ENCODE measurements at regions of chr3 and their contacts with region 1.

Region 1: GRCh38 chr3:120450600-120451271 is at the start of gene FSTL1:
- DNase-seq: no peak
- H3K4me3 ChIP-seq: peak within 1 kb of the TSS; percentile 89
- CTCF ChIP-seq: no peak

Region 2: GRCh38 chr3:120214161-120214560 is 236.6 kb before region 1 on chr3:
- CTCF ChIA-PET with region 1: no interaction called
- POLR2A ChIA-PET with region 1: no interaction called
- DNase-seq: no peak
- H3K4me3 ChIP-seq: no peak overlapping the region
- CTCF ChIP-seq: no peak

Region 3: GRCh38 chr3:120438665-120439370 is 11.9 kb before region 1 on chr3:
- CTCF ChIA-PET with region 1: interaction called, 5 read pairs
- POLR2A ChIA-PET with region 1: interaction called, 31 read pairs
- DNase-seq: no peak
- H3K4me3 ChIP-seq: no peak overlapping the region
- CTCF ChIP-seq: no peak

Region 4: GRCh38 chr3:120470870-120471269 is 20.1 kb after region 1 on chr3:
- CTCF ChIA-PET with region 1: interaction called, 19 read pairs
- POLR2A ChIA-PET with region 1: interaction called, 18 read pairs
- DNase-seq: no peak
- H3K4me3 ChIP-seq: no peak overlapping the region
- CTCF ChIP-seq: no peak